ENCODE measurements at regions of chr2 and their contacts with region 1.

Region 1: GRCh38 chr2:56183643-56184499 is at the start of gene CCDC85A:
- DNase-seq: peak; percentile 85
- ATAC-seq: peak; percentile 94
- H3K4me3 Mint-ChIP-seq: peak within 1 kb of the TSS; percentile 12
- H3K27ac Mint-ChIP-seq: no peak within 1 kb of the TSS
- H3K4me1 Mint-ChIP-seq: peaks cover 8% of the 10 kb centered on the region
- H3K27me3 Mint-ChIP-seq: peaks cover 43% of the 10 kb centered on the region
- total RNA-seq, gene CCDC85A: not detected

Region 2: DNA sequence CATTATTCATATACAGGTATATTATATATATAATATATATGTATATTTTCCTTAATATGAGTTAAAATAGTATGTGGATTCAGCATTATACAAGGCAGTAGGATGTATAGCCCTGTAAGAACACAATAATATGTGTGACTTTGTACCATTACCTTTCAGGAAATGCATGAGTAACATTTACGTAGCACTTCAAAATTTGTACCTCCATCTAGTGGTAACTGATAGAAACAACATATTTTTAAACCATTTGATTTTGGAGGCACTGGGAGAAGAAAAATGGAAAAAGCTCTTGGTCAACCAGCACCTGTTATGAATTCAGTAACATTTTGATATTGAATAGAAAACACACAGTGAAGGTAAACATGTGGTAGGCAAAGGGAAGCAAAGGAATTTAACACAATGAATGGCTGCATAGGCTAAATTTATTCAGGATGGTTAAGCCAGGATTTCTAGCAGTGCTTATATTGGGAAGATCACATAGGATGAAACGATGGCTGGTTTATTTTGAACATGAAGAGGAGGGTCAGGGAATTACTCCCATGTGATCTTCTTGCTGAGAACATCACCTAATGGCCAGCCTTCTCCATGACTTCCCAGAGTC is 565.4 kb after region 1 on chr2:
- CTCF ChIA-PET with region 1: interaction called, 3 read pairs
- POLR2A ChIA-PET with region 1: no interaction called
- intact Hi-C with region 1: loop called (anchors 1 to 10 kb)
- DNase-seq: no peak
- ATAC-seq: no peak
- H3K4me3 Mint-ChIP-seq: no peak overlapping the region
- H3K27ac Mint-ChIP-seq: no peak overlapping the region
- H3K4me1 Mint-ChIP-seq: no peaks in the 10 kb centered on the region
- H3K27me3 Mint-ChIP-seq: no peaks in the 10 kb centered on the region

Region 3: DNA sequence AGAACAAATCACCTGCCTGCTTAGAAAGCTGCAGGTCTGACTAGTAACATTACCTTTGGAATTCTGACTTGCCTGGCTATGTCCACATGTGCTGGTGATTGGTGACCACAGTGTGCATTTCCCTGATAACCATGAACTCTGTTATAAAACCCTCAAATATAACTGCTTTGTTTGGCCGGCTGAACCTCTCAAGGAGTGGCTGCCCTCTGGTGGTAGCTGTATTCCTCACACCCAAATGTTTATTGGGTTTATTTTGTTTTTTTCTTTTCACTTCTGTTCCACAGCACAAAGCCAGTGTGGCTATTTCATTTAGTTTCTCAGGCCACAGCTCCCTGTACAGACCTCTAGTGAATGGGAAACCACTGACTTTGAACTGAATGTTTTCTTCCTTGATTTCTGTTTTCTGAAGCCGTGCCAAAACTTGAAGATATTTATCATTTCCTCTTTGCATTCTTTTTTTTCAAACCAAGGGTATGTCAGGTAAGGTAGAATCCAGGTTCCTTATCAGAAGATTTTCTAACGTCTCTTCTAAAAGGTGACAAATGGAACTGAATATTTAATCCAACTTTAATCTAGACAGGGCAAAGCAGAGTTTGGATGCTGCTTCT is 1313.7 kb after region 1 on chr2:
- CTCF ChIA-PET with region 1: interaction called, 6 read pairs
- POLR2A ChIA-PET with region 1: no interaction called
- intact Hi-C with region 1: loop called in 1 of 2 experiments (anchors 1 kb)
- DNase-seq: peak; percentile 55
- ATAC-seq: peak; percentile 26
- H3K4me3 Mint-ChIP-seq: no peak overlapping the region
- H3K27ac Mint-ChIP-seq: no peak overlapping the region
- H3K4me1 Mint-ChIP-seq: no peaks in the 10 kb centered on the region
- H3K27me3 Mint-ChIP-seq: no peaks in the 10 kb centered on the region

Region 4: GRCh38 chr2:57516698-57517340 is 1332.9 kb after region 1 on chr2:
- CTCF ChIA-PET with region 1: interaction called, 5 read pairs
- POLR2A ChIA-PET with region 1: no interaction called
- intact Hi-C with region 1: loop called in 1 of 2 experiments (anchors 1 kb)
- DNase-seq: no peak
- ATAC-seq: no peak
- H3K4me3 Mint-ChIP-seq: no peak overlapping the region
- H3K27ac Mint-ChIP-seq: no peak overlapping the region
- H3K4me1 Mint-ChIP-seq: no peaks in the 10 kb centered on the region
- H3K27me3 Mint-ChIP-seq: no peaks in the 10 kb centered on the region